GM13977 (cell line): ENCODE measurements at regions of chr5 and their contacts with region 1.

Region 1: DNA sequence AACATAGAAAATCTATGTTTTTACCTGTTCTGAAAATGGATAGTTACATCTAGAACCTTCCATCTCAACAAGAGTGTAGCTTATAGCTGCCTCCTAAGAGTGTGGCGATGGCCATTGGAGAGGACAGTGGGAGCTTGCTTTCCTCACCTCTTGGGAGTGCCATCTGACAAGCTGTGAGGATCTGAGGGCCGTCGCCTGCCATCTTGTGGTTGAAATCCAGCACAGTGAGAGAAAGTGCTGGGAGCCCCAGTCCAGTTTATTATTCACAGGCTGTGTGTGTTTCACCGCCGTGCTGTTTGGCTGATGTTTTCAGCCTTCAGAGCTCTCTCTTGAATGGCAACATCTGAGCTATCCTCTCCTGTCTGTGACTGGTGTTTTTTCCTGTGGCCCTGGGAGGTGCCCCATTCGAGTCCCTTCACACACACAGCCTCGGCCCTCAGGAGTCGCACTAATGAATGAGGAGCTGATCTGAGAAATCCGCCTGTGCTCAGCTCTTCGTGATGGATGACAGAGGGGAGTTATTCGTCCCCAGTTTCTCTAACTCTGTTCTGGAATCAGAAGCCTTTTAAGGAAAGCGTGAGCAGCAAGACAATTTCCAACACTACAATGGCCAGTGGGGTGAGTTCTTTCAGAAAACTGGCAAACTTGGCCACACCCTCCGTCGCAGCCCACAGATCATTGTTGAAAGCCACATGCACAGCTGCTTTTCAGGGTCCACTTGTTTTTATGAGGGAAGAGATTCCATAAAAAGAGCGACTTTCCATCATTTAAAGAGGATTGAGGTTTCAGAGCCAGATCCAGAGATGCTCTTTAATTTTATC is 170.3 kb downstream of the PDZD2 start:
- DNase-seq: peak; percentile 65
- CTCF ChIP-seq: peak; percentile 64

Region 2: GRCh38 chr5:31581498-31582099 is 227.7 kb before region 1 on chr5:
- in situ Hi-C with region 1: loop called (anchors 25 kb)
- DNase-seq: no peak
- CTCF ChIP-seq: peak; percentile 50

Region 3: DNA sequence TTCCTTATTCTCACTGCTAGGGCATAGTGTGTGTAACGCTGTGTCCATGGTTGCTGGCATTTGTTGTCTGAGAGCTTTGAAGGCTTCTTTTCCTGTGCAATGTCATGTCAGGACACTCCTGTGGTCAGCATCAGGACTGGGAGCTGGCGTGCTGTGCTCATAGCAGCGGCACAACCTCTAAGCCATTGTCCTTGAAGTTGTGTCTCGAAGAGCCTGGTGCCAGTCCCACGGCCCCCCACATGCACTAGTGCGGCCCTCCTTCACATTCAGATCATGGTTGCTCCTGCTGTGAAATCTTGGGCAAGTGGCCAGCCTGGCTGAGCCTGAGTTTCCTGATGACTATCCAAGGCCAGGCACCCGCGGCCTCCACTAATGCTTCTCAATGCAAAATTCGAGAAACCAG is 137.9 kb before region 1 on chr5:
- in situ Hi-C with region 1: no loop called
- DNase-seq: no peak
- CTCF ChIP-seq: no peak

Region 4: DNA sequence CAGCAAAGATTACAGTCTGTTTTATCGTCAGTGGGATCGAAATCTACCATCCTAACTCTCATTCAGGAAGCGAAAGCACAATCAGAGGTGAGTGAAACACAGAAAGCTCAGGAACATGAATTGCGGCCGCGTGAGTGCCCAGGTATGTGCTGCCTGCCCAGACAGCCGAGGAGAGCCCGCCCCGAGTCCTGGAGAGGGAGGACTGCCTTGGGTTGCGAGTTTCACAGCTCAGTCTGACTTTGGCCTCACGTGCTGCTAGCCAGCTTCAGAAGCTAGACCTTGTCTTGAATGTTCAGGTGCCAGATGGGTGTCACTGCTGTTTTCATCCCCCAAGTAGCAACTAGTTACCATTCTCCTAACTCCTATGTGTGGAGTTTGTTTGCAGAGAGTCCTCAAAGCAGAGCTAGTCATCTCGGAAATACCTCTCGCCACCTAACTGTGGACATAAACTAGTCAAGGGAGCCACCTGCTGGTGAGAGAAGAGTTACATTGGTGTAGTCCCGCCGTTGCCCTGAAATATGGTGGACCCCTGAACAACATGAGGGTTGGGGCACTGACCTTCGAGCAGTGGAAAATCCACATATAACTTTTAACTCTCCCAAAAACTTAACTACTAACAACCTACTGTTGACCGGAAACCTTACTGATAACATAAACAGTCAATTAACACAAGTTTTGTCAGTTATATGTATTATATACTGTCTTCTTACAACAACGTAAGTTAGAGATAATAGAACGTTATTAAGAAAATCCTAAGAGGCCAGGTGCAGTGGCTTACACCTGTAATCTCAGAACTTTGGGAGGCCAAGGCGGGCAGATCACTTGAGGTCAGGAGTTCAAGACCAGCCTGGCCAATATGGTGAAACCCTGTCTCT is 283.9 kb after region 1 on chr5:
- in situ Hi-C with region 1: loop called (anchors 25 kb)
- DNase-seq: peak; percentile 87
- CTCF ChIP-seq: peak; percentile 78